ENCODE measurements at regions of chr10 and their contacts with region 1.

Region 1: DNA sequence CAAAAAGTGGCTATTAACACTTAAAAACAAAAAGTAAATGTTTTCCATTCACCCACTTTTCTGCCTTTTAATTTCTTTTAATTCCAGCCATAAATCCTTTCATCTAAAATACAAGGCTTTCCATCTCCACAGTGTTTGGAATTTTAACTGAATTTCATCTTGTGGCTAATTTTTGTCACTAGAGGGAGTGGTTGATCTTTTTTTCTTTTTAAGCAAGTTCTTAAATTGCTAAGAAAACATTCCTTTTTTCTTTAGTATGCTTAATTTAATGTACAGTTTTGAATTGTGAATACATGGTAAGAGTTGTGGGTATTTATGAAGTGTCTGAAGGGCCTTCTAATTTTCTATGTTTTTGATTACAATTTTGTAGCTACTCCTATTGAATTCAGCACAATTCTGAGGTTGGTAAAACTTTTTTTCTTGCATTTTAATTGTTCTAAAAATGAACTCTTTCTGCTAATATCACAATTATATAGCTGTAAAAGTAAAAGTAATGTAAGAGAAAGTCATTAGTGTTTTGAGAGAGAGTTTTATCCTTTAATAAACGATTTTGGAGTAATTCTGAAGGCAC is 54.9 kb upstream of the ANK3 start:
- DNase-seq: no peak
- ATAC-seq: no peak
- H3K4me3 ChIP-seq: no peak overlapping the region
- H3K27ac ChIP-seq: no peak overlapping the region
- H3K4me1 ChIP-seq: peaks cover 23% of the 10 kb centered on the region
- H3K27me3 ChIP-seq: no peaks in the 10 kb centered on the region
- CTCF ChIP-seq: peak in 6 of 7 experiments; percentile 31 to 63 (median 57)
- POLR2A ChIP-seq: no peak

Region 2: DNA sequence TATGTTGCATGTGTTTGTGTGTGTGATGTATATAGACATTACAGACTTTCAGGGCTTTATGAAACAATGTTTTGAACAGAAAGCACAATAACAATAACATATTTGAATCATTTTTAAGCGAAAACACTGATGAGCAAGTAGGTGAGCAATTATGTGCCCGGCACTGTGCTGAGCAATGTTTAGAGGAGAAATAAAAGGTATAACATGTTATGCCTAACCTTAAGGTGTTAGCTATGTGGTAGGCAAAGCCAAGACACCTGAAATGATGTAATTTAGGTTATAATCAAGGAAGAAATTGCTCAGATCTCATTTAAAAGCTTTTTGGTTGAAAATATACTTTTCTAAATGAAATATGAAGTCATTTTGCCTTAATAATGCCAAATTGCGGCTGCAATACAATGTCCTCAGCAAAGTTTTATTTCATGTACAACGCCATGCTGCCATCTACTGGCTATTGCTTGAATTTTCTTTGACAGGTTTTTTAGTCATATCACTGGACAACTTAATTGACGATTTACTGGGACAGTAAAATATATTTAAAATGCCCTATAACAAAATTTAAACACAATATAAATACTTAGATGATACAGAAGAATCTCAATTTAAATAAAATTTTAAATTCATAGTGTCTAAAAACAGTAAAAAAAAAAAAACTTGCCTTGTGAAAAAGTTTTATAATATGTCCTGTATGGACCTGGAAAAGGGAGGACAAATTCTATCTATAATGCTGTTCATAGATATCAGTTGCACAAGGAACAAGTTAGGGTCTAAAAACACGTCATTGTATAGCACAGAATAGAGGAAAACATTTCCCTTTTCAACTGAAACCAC is 202.6 kb after region 1 on chr10:
- intact Hi-C with region 1: loop called (anchors 5 kb)
- DNase-seq: peak; percentile 22 to 53 (median 42)
- ATAC-seq: peak; percentile 52
- H3K4me3 ChIP-seq: no peak overlapping the region
- H3K27ac ChIP-seq: no peak overlapping the region
- H3K4me1 ChIP-seq: peaks cover 14% of the 10 kb centered on the region
- H3K27me3 ChIP-seq: no peaks in the 10 kb centered on the region
- CTCF ChIP-seq: peak; percentile 53 to 84 (median 75)
- POLR2A ChIP-seq: no peak